ENCODE measurements at regions of chr7 and their contacts with region 1.

Region 1: DNA sequence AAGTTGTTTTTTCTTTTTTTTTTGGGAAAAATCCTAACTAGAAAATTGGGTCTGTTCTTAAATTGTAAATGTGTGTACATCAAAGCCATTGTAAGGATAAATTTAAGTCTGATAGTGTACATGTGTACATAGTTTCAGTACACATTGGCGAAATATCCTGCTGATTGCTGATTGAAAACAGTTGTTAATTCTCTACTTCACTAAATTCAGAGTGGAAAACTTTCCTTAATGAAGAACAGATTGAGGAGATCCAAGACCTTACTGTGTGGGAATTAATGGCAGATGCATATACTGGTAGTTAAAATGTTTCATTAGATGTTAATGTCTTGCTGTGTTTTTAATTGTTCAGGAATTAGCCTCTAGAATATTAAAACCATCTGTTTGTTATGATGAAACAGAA is 506.0 kb downstream of the AUTS2 start:
- DNase-seq: no peak
- ATAC-seq: no peak
- H3K4me3 ChIP-seq: no peak overlapping the region
- H3K27ac ChIP-seq: no peak overlapping the region
- H3K4me1 ChIP-seq: no peaks in the 10 kb centered on the region
- H3K27me3 ChIP-seq: no peaks in the 10 kb centered on the region
- CTCF ChIP-seq: no peak
- POLR2A ChIP-seq: no peak
- RAD21 ChIP-seq: no peak

Region 2: GRCh38 chr7:70016044-70016770 is 88.0 kb before region 1 on chr7:
- CTCF ChIA-PET with region 1: no interaction called
- POLR2A ChIA-PET with region 1: no interaction called
- RAD21 ChIA-PET with region 1: no interaction called
- intact Hi-C with region 1: no loop called
- DNase-seq: no peak
- ATAC-seq: no peak
- H3K4me3 ChIP-seq: no peak overlapping the region
- H3K27ac ChIP-seq: no peak overlapping the region
- H3K4me1 ChIP-seq: no peaks in the 10 kb centered on the region
- H3K27me3 ChIP-seq: no peaks in the 10 kb centered on the region
- CTCF ChIP-seq: no peak
- POLR2A ChIP-seq: no peak
- RAD21 ChIP-seq: no peak

Region 3: DNA sequence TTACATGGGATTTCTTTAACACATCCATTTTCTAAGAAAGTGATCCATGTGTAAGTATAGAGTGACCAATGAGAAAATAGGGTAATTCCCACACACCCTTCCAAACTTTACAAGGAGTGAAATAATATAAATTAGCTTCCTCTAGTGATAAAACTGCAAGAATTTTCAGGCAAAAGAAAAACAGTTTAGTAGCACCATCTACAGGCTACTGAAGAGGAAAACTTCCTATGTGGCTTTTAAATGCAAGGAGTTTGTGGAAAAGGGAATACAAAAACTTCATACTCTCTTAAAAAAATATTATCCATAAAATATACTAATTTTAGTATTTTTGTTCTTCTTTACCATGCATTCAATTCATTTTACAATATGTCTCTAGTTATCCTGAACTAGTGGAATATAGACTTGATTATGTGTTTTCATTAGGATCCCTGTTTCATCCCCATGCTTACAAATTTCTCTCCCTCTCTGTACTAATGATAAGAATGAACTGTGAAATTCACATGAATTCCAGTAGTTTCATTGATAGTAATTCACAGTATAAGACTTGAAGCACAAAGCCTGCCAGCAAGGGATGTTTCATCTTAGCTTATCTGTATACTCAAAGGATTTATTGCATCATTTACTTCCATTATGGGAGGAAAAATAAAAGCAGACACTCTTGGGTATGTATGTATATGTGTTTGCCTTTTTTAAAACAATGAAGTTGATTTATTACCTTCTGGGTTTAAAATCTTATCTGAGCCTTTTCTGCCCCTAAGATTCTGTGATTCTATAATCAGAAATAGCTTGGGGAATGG is 63.1 kb before region 1 on chr7:
- CTCF ChIA-PET with region 1: no interaction called
- POLR2A ChIA-PET with region 1: no interaction called
- RAD21 ChIA-PET with region 1: no interaction called
- intact Hi-C with region 1: loop called (anchors 10 kb)
- DNase-seq: no peak
- ATAC-seq: no peak
- H3K4me3 ChIP-seq: no peak overlapping the region
- H3K27ac ChIP-seq: no peak overlapping the region
- H3K4me1 ChIP-seq: no peaks in the 10 kb centered on the region
- H3K27me3 ChIP-seq: no peaks in the 10 kb centered on the region
- CTCF ChIP-seq: no peak
- POLR2A ChIP-seq: no peak
- RAD21 ChIP-seq: no peak

Region 4: GRCh38 chr7:70092314-70093204 is 11.7 kb before region 1 on chr7:
- CTCF ChIA-PET with region 1: no interaction called
- POLR2A ChIA-PET with region 1: no interaction called
- RAD21 ChIA-PET with region 1: no interaction called
- intact Hi-C with region 1: no loop called
- DNase-seq: no peak
- ATAC-seq: no peak
- H3K4me3 ChIP-seq: no peak overlapping the region
- H3K27ac ChIP-seq: no peak overlapping the region
- H3K4me1 ChIP-seq: no peaks in the 10 kb centered on the region
- H3K27me3 ChIP-seq: no peaks in the 10 kb centered on the region
- CTCF ChIP-seq: no peak
- POLR2A ChIP-seq: no peak
- RAD21 ChIP-seq: no peak